ENCODE measurements at regions of chr10 and their contacts with region 1.

Region 1: DNA sequence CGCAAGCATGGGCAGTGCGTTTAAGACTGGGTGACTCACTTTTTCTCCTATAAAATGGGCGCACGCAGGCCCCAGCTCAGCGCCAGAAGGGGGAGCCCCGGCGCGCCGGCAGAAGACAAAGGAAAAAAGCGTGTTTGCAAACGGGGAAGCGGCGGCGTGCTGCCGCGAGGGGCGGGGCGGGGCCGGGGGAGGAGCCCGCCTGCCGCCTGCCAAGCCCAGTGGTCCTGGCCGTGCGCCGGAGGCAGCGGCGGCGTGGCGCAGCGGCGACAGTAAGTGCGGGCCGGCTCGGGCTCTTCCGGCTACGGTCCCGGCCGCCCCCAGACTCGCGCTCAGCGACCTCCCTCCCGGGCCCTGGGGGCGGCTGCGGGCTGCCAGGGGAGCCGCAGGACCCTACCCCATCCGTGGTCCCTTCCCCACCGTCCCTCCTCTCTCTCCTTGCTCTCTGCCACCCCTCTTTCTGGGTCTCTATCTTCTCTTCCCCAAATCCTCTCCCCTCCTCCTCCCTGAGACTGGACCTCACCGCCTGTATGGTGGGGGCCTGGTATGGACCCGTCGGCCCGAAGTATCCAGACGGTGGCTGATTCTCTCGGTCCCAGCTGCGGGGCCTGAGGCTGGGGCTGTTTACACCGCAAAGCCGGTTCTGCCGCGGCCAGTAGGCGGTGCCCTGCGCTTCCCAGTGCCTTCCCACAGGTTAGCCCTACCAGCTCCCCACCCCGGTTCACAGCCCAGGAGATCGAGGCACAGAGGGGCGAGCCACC is at the start of gene SLC29A3:
- DNase-seq: peak; percentile 91
- ATAC-seq: peak; percentile 92
- total RNA-seq, gene SLC29A3: 1.8 TPM

Region 2: DNA sequence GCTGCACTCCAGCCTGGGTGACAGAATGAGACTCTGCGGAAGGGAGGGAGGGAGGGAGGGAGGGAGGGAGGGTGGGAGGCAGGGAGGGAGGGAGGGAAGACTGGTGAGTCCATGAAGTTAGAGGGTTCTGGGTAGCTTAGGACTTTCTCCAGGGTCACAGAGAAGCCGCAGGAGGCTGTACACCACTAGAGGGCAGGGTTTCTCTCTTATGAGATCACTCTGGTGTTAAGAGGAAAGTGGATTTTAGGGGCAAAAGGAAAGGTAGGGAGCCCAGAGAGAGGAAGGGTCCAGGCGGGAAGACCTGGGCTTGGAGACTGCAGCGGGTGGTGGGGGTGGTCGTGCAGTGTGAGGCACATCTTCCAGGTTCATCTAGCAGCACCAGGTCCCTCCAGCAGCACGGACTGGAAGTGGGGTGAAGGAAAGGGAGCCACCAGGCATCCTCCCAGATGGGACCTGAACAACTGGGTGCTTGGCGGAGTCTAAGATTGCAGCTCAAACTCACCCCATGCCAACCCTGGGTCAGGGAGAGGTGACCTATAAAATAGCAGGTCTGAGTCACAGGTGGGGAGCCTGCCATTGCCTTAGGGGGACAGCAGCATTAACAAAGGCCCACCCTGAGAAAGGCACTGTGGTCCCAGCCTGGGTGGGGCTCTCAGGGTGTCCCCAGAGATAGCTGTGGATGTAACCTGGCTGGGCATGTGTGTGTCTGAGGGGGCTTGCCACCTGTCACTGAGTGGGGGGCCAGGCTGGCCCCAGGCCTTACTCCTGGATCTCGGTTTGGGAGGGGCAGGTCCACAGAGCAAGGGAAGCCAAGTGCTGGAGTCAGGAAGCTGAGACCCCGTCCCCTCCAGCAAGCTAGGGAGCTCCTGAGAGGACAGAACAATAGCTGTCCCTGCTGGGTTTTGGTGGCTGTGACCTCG is 48.7 kb before region 1 on chr10:
- intact Hi-C with region 1: no loop called
- DNase-seq: peak; percentile 64
- ATAC-seq: no peak

Region 3: DNA sequence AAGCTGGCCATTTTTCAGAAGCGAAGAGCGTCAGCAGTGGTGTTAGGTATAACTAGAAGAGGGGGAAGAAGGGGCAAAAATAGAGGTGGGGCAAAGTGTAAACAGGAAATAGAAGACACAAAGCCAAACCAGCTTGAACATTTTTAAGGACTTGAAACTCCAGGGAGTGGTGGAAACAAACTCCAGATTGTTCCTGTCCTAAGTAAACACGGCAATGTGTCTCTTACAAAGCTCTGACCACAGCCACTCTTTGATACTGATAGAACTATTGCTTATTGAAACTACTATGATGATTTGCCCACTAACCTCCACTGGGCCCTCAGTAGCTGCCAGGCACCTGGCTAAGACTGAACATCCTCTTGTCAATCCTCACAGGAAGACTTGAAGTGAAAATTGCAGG is 56.7 kb after region 1 on chr10:
- intact Hi-C with region 1: loop called (anchors 2 kb)
- DNase-seq: no peak
- ATAC-seq: no peak

Region 4: GRCh38 chr10:71486484-71487114 is 167.4 kb after region 1 on chr10:
- intact Hi-C with region 1: loop called (anchors 2 kb)
- DNase-seq: no peak
- ATAC-seq: no peak

Region 5: GRCh38 chr10:71569775-71570588 is 250.8 kb after region 1 on chr10:
- intact Hi-C with region 1: loop called (anchors 5 kb)
- DNase-seq: no peak
- ATAC-seq: peak; percentile 44

Region 6: DNA sequence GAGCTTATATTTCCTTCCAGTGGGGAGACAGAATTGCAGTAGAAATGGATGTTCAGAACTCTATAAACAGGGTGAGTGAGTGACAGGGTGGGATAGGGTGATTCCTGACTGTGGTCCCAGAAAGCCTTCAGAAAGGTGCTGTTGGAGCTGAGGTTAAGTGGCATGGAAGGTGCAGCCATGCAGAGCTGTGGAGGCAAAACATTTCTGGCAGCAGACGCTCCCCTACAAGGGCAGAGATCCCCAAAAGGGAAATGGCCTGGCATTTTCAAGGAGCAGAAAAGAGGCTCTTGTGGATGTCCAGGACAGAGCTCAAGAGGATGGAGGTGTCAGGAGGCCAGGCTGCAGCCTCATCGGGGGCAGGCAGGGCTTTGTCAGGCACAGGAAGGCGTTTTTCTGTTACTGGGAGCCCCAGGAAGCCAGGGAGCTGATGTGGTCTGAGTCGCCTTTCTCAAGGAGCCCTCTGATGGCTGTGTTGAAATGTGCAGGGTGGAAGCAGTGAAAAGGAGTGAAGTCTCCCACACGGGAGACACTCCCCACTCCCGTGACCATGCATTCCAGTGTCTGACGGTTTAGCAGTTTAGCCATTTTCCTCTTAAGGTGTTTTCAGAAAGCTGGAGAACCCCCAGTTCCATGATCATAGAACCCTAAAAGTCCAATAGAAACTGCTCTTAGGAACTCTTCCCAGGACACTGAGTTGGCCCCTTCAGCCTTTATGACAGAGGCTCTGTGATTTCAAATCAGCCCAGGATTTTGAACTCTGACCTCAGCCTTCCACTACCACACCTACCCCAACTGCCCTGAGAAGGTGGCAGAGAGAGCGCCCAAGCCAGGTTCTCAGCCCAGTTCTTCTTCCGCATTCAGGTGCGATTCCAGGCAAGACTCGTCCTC is 304.1 kb after region 1 on chr10:
- intact Hi-C with region 1: loop called (anchors 5 kb)
- DNase-seq: no peak
- ATAC-seq: peak; percentile 24

Region 7: DNA sequence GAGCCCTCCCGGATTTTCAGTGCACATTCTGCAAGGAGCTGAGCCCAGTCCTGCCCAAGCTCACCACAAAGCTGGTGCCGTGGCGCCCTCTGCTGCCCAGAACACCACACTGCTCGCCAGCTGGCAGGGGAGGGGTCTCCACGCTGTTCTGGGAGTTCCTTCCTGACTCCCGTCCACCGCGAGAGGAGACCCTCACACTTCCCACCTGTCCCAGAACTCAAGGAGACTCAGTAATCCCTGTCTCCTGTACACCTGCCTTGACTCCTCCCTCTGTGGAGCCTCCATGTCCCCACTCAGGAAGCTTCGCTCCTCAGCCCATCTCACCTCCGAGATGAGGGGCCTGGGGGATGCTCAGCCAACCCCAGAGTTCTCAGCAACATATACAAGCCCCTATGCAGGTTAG is 389.1 kb after region 1 on chr10:
- intact Hi-C with region 1: loop called (anchors 5 kb)
- DNase-seq: peak; percentile 91
- ATAC-seq: no peak